A673 (cell line): ENCODE measurements at regions of chr6 and their contacts with region 1.

Region 1: DNA sequence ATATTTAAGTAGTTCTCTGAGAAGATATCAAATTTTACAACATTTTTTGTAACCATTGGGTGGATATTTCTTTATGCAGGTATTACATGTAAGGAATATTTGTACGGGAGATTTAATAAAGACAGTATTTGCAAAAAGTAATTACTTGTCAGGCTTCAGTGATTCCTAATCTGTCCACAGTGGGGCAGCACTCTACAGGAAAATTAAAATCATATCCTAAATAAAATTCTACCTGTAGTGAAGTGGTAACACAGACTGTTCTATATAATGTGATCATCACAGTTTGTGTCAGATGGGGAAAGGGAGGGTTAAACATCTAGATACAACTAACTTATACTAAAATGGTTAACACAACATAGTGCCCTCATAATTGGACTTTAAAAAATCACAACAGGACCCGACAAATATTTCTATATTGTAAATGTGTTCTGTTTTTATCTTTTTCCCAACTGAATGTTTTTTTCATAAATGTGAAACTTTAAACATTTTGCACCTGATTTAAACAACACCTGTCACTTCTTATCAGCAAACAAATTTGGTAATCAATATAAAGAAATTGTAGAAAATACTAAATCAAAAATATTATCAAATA is 145.6 kb upstream of the MANEA start:
- DNase-seq: peak; percentile 61
- H3K4me3 ChIP-seq: no peak overlapping the region
- H3K27ac ChIP-seq: no peak overlapping the region
- H3K4me1 ChIP-seq: no peaks in the 10 kb centered on the region
- H3K27me3 ChIP-seq: no peaks in the 10 kb centered on the region
- CTCF ChIP-seq: peak; percentile 83

Region 2: GRCh38 chr6:94721459-94721858 is 710.3 kb before region 1 on chr6:
- CTCF ChIA-PET with region 1: no interaction called
- POLR2A ChIA-PET with region 1: no interaction called
- intact Hi-C with region 1: no loop called
- DNase-seq: no peak
- H3K4me3 ChIP-seq: no peak overlapping the region
- H3K27ac ChIP-seq: no peak overlapping the region
- H3K4me1 ChIP-seq: no peaks in the 10 kb centered on the region
- H3K27me3 ChIP-seq: no peaks in the 10 kb centered on the region
- CTCF ChIP-seq: no peak

Region 3: DNA sequence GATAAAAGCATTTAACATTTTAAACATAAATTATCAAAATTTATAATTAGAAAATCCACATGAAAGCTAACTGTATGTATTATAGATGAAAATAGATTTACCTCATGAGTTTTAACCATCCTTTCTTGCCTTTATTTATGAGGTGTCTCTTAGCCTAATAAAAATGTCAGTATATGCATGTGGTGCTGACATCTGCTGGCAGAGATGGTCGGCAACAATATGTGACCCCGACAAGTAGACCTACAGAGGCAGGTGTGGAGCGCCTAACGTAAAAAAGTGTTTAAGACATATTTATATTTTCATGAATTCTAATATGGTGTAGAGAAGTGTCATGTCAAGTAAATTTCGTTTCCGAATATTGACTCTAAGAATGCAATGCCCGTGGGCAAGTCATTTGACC is 435.0 kb after region 1 on chr6:
- CTCF ChIA-PET with region 1: no interaction called
- POLR2A ChIA-PET with region 1: no interaction called
- intact Hi-C with region 1: loop called (anchors 1 kb)
- DNase-seq: peak; percentile 30
- H3K4me3 ChIP-seq: no peak overlapping the region
- H3K27ac ChIP-seq: no peak overlapping the region
- H3K4me1 ChIP-seq: no peaks in the 10 kb centered on the region
- H3K27me3 ChIP-seq: no peaks in the 10 kb centered on the region
- CTCF ChIP-seq: peak; percentile 63

Region 4: DNA sequence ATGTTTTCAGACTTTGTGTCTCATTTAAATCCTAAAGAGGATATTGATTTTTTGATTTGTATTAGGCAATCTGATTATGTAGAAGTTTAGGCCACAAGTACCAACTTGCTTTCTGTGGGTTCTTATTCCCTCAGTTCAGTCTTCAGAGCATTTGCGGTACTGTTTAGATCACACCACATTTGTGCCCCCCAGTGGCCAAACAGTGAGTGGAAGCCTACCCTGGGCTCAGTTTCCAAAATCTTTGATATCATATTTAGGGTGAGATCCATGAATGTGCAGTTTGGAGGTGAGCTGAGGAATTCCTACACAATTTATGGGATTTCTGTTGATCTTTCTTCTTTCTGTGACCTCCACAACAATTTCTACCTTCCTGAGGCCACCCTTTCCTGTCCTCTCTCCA is 491.8 kb after region 1 on chr6:
- CTCF ChIA-PET with region 1: no interaction called
- POLR2A ChIA-PET with region 1: no interaction called
- intact Hi-C with region 1: loop called (anchors 1 kb)
- DNase-seq: peak; percentile 52
- H3K4me3 ChIP-seq: no peak overlapping the region
- H3K27ac ChIP-seq: no peak overlapping the region
- H3K4me1 ChIP-seq: no peaks in the 10 kb centered on the region
- H3K27me3 ChIP-seq: no peaks in the 10 kb centered on the region
- CTCF ChIP-seq: peak; percentile 62

Region 5: GRCh38 chr6:96101560-96101959 is 669.8 kb after region 1 on chr6:
- CTCF ChIA-PET with region 1: no interaction called
- POLR2A ChIA-PET with region 1: no interaction called
- intact Hi-C with region 1: loop called (anchors 10 kb)
- DNase-seq: no peak
- H3K4me3 ChIP-seq: no peak overlapping the region
- H3K27ac ChIP-seq: no peak overlapping the region
- H3K4me1 ChIP-seq: peaks cover 22% of the 10 kb centered on the region
- H3K27me3 ChIP-seq: no peaks in the 10 kb centered on the region
- CTCF ChIP-seq: no peak

Region 6: DNA sequence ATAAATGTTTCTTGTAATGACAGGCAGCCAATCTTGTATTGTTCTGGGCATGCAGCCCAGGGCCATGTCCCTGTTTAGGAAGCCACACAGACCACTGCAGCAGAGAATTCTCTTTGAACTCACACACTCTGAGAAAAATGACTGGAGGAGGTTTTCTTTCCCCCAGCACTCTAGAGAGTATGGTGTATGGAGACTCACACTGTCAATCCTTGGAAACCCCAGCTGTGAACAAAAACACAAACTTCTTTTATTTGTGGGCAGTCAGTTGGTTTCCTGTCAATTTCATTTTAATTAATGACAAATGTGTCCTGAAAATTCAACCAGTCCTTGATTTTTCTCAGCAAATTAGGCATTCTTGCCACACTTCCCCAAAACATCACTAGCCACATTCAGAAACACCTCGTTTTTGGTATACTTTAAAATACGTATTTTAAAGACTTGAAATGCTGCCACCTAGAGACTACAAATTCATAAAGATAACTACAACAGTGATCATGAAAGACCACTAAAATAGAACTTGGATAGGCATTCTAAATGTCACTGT is 1037.0 kb after region 1 on chr6:
- CTCF ChIA-PET with region 1: no interaction called
- POLR2A ChIA-PET with region 1: no interaction called
- intact Hi-C with region 1: loop called (anchors 10 kb)
- DNase-seq: peak; percentile 53
- H3K4me3 ChIP-seq: no peak overlapping the region
- H3K27ac ChIP-seq: no peak overlapping the region
- H3K4me1 ChIP-seq: no peaks in the 10 kb centered on the region
- H3K27me3 ChIP-seq: no peaks in the 10 kb centered on the region
- CTCF ChIP-seq: peak; percentile 62; the same call in 1 of the 2 replicates